CD4-positive, alpha-beta memory T cell (primary cell): ENCODE measurements at regions of chr17 and their contacts with region 1.

Region 1: DNA sequence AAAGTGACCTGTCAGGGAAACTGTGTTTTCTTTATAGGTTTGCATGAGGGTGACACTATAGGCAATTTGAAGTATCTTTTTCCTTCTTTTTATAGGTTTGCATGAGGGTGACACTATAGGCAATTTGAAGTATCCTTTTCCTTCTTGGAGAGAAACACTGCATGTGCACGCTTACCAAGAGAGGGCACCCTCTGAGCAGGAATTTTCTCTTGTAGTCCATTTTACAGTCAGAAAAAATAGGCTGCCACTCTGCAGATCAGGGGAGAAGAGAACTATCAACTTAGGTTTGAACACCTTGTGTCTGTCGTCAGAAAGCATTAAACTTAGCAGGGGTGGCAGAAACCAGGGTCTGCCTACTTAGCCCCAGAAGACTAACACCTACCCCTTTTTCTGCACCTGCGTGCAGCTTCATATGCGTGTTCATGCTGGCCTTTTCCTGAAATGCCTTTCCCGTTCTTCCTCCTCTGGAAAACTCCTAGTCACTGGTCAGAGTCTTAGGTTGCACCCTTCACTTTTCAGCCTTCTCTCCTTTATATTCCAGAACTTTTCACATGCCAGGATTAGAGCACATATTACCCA is 16.4 kb upstream of the SMIM36 start:
- DNase-seq: no peak
- H3K4me3 ChIP-seq: no peak overlapping the region
- H3K4me3 Mint-ChIP-seq: no peak overlapping the region
- H3K27ac ChIP-seq: no peak overlapping the region
- H3K27ac Mint-ChIP-seq: no peak overlapping the region
- H3K4me1 ChIP-seq: no peaks in the 10 kb centered on the region
- H3K4me1 Mint-ChIP-seq: no peaks in the 10 kb centered on the region
- H3K27me3 ChIP-seq: no peaks in the 10 kb centered on the region
- H3K27me3 Mint-ChIP-seq: peaks cover 0 to 6% of the 10 kb centered on the region in 2 donors

Region 2: DNA sequence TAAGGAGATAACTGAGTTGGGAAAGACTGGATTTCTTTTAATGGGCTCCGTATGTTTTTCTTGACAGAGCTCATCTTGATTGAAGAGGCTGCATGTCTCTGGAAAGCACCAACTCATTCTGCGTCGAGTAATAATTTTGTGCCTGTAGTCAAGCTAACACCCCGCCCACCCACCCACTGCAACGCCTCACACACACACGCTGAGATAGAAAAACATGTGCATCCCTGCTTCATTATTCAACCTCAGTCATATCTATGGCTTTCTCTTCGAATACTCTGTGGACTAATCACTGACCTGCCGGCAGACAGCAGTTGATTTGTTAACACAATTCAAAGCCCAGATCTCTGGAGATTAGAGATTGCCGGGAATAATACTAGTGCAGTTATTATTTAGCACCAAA is 847.2 kb before region 1 on chr17:
- CTCF ChIA-PET with region 1: no interaction called
- POLR2A ChIA-PET with region 1: no interaction called
- intact Hi-C with region 1: no loop called
- DNase-seq: no peak
- H3K4me3 ChIP-seq: no peak overlapping the region
- H3K4me3 Mint-ChIP-seq: no peak overlapping the region
- H3K27ac ChIP-seq: no peak overlapping the region
- H3K27ac Mint-ChIP-seq: no peak overlapping the region
- H3K4me1 ChIP-seq: no peaks in the 10 kb centered on the region
- H3K4me1 Mint-ChIP-seq: no peaks in the 10 kb centered on the region
- H3K27me3 ChIP-seq: no peaks in the 10 kb centered on the region
- H3K27me3 Mint-ChIP-seq: peaks cover 0 to 1% of the 10 kb centered on the region in 2 donors

Region 3: DNA sequence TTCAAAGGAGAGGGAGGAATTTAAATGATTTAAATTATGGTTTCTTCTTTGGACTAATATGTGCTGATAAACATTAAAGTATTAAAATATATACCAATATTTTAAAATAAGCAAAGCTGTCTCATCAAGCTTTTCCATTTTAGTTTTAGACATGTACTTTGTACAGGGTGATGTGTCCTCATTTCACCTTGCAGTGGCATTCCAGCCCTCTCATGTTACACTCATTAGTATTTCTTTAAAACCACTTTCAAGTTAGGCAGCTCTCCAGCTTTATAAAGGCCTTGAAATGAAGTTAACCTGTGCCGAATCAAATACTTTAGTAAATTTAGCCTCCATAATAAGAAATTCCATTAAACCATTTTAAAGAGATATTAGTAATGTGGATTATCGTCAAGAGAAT is 370.5 kb before region 1 on chr17:
- CTCF ChIA-PET with region 1: no interaction called
- POLR2A ChIA-PET with region 1: no interaction called
- intact Hi-C with region 1: no loop called
- DNase-seq: no peak
- H3K4me3 ChIP-seq: no peak overlapping the region
- H3K4me3 Mint-ChIP-seq: no peak overlapping the region
- H3K27ac ChIP-seq: no peak overlapping the region
- H3K27ac Mint-ChIP-seq: no peak overlapping the region
- H3K4me1 ChIP-seq: no peaks in the 10 kb centered on the region
- H3K4me1 Mint-ChIP-seq: peaks cover 0 to under 1% (median 0%) of the 10 kb centered on the region in 4 donors
- H3K27me3 ChIP-seq: no peaks in the 10 kb centered on the region
- H3K27me3 Mint-ChIP-seq: no peaks in the 10 kb centered on the region

Region 4: DNA sequence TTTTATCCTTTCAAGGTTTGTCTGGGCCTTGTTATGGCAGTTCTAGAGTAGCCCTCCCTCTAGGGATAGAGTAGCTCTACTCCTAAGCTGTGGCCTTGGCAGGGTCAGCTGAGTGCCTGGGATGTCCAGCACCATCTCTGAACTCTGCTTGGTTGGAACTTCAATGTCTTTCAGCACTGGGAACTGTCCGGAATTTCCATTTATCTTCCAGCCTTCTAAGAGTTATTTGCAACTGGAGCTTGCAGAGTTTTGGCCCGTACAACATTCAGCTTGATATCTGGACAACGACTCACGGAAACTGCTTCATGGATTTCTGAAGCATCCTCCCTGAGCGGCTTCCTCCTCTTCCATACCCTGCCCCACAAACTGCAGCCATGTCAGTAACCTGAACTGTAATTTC is 128.9 kb before region 1 on chr17:
- CTCF ChIA-PET with region 1: no interaction called
- POLR2A ChIA-PET with region 1: no interaction called
- intact Hi-C with region 1: no loop called
- DNase-seq: no peak
- H3K4me3 ChIP-seq: no peak overlapping the region
- H3K4me3 Mint-ChIP-seq: no peak overlapping the region
- H3K27ac ChIP-seq: no peak overlapping the region
- H3K27ac Mint-ChIP-seq: no peak overlapping the region
- H3K4me1 ChIP-seq: no peaks in the 10 kb centered on the region
- H3K4me1 Mint-ChIP-seq: peaks cover 0 to 1% (median 0%) of the 10 kb centered on the region in 4 donors
- H3K27me3 ChIP-seq: no peaks in the 10 kb centered on the region
- H3K27me3 Mint-ChIP-seq: no peaks in the 10 kb centered on the region

Region 5: GRCh38 chr17:55513885-55514591 is 13.6 kb before region 1 on chr17:
- CTCF ChIA-PET with region 1: interaction called, 37 read pairs
- POLR2A ChIA-PET with region 1: no interaction called
- intact Hi-C with region 1: no loop called
- DNase-seq: peak; percentile 54 to 66 (median 58)
- H3K4me3 ChIP-seq: no peak overlapping the region
- H3K4me3 Mint-ChIP-seq: no peak overlapping the region
- H3K27ac ChIP-seq: no peak overlapping the region
- H3K27ac Mint-ChIP-seq: no peak overlapping the region
- H3K4me1 ChIP-seq: no peaks in the 10 kb centered on the region
- H3K4me1 Mint-ChIP-seq: peaks cover 0 to 3% (median 0%) of the 10 kb centered on the region in 4 donors
- H3K27me3 ChIP-seq: peaks cover 6% of the 10 kb centered on the region
- H3K27me3 Mint-ChIP-seq: peaks cover 2 to 4% of the 10 kb centered on the region in 2 donors

Region 6: GRCh38 chr17:55601874-55602364 is 74.3 kb after region 1 on chr17:
- CTCF ChIA-PET with region 1: interaction called, 167 read pairs
- POLR2A ChIA-PET with region 1: no interaction called
- intact Hi-C with region 1: loop called (anchors 1 kb)
- DNase-seq: peak; percentile 34 to 44 (median 36)
- H3K4me3 ChIP-seq: no peak overlapping the region
- H3K4me3 Mint-ChIP-seq: no peak overlapping the region
- H3K27ac ChIP-seq: no peak overlapping the region
- H3K27ac Mint-ChIP-seq: no peak overlapping the region
- H3K4me1 ChIP-seq: no peaks in the 10 kb centered on the region
- H3K4me1 Mint-ChIP-seq: no peaks in the 10 kb centered on the region
- H3K27me3 ChIP-seq: no peaks in the 10 kb centered on the region
- H3K27me3 Mint-ChIP-seq: peaks cover 5 to 11% of the 10 kb centered on the region in 2 donors

Region 7: DNA sequence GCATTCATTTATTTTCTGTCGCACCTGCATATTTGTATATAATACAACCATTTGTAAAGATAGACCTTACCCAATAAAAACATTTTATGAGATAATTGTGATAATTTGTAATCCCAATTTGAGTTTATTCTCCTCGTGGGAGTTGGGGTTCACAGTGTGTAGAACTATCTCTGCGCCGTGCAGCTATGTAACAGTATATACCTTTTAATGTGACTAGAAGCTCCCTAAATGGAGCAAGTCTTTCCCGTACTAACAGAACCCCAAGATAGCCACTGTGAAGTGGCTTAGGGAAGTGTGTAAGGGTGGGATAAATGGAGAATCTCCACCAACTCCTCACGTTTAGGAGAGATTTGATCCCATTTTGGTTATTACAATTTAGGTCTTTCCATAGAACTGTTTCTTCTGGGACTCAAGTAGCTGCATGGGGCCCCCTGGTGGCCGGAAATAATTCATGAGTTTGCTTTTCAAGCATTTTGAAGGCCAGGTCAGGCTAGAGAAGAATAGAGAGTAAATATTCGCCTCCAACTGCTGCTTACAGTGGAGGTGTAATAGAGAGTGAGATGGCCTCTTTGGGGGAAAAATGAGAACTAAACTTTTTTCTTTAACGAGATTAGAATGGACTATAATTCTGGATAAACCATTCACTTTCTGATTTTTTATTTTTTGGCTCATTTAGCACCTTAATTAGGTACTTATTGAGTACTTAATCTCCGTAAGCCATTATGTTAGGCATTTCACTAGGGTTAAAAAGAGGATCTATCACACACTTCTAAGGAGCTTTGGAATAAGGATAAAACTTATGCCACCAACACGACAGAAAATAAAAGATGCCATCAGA is 190.5 kb after region 1 on chr17:
- CTCF ChIA-PET with region 1: interaction called, 58 read pairs
- POLR2A ChIA-PET with region 1: interaction called, 3 read pairs
- intact Hi-C with region 1: loop called (anchors 1 kb)
- DNase-seq: peak; percentile 38 to 54 (median 39)
- H3K4me3 ChIP-seq: no peak overlapping the region
- H3K4me3 Mint-ChIP-seq: no peak overlapping the region
- H3K27ac ChIP-seq: no peak overlapping the region
- H3K27ac Mint-ChIP-seq: no peak overlapping the region
- H3K4me1 ChIP-seq: no peaks in the 10 kb centered on the region
- H3K4me1 Mint-ChIP-seq: no peaks in the 10 kb centered on the region
- H3K27me3 ChIP-seq: no peaks in the 10 kb centered on the region
- H3K27me3 Mint-ChIP-seq: peaks cover 17 to 21% of the 10 kb centered on the region in 2 donors

Region 8: GRCh38 chr17:55770148-55770870 is 242.7 kb after region 1 on chr17:
- CTCF ChIA-PET with region 1: interaction called, 5 read pairs
- POLR2A ChIA-PET with region 1: no interaction called
- intact Hi-C with region 1: loop called (anchors 1 kb)
- DNase-seq: no peak
- H3K4me3 ChIP-seq: no peak overlapping the region
- H3K4me3 Mint-ChIP-seq: no peak overlapping the region
- H3K27ac ChIP-seq: no peak overlapping the region
- H3K27ac Mint-ChIP-seq: no peak overlapping the region
- H3K4me1 ChIP-seq: no peaks in the 10 kb centered on the region
- H3K4me1 Mint-ChIP-seq: peaks cover 0 to 2% (median 0%) of the 10 kb centered on the region in 4 donors
- H3K27me3 ChIP-seq: no peaks in the 10 kb centered on the region
- H3K27me3 Mint-ChIP-seq: no peaks in the 10 kb centered on the region